Sciatic nerve (tissue), 2 donors: ENCODE measurements at regions of chr12 and their contacts with region 1.

Region 1: GRCh38 chr12:107118624-107119023 is 25.3 kb upstream of the CRY1 start:
- DNase-seq: no peak
- ATAC-seq: no peak

Region 2: GRCh38 chr12:107138990-107139389 is 20.4 kb after region 1 on chr12:
- intact Hi-C with region 1: loop called (anchors 1 kb)
- DNase-seq: no peak
- ATAC-seq: no peak

Region 3: GRCh38 chr12:107492393-107493134 is 373.9 kb after region 1 on chr12:
- intact Hi-C with region 1: no loop called
- DNase-seq: no peak
- ATAC-seq: peak; percentile 27